ENCODE measurements at regions of chr15 and their contacts with region 1.

Region 1: GRCh38 chr15:57541805-57542504 is 49.7 kb upstream of the MYZAP start:
- DNase-seq: peak in 1 of 5 donors; percentile 14
- H3K4me3 ChIP-seq: no peak overlapping the region
- H3K4me3 Mint-ChIP-seq: no peak overlapping the region
- H3K27ac ChIP-seq: no peak overlapping the region
- H3K27ac Mint-ChIP-seq: no peak overlapping the region
- H3K4me1 ChIP-seq: no peaks in the 10 kb centered on the region
- H3K4me1 Mint-ChIP-seq: no peaks in the 10 kb centered on the region
- H3K27me3 ChIP-seq: no peaks in the 10 kb centered on the region
- H3K27me3 Mint-ChIP-seq: peaks cover 3 to 15% of the 10 kb centered on the region in 2 donors

Region 2: DNA sequence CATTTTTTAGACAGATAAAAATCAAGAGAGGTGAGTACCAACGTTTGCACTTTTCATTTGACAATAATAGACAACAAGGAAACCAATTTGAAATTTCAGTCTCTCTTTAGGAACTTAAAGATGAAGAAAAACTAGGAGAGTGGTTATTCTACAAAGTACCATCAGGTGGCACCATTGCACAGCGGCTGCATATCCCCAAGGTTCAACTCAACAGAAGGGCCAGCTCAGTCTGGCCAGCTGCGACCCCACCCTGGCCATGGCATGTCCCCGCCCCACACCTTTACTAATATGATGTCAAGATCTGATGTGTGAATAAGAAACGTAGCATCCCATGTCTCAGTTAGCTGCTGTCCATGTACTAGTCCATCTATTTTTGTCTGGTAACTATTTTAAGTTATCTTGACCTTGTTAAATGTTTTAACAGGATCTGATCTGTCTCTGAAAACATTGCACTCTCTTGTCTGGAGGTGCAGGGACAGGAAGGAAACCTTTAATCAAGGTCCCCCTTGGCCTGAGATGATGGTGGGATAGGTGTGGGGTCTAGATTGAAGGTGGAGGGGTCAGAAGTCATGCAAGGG is 201.2 kb before region 1 on chr15:
- CTCF ChIA-PET with region 1: interaction called, 5 read pairs
- POLR2A ChIA-PET with region 1: no interaction called
- intact Hi-C with region 1: loop called (anchors 5 kb)
- DNase-seq: peak in 4 of 5 donors; percentile 7 to 12 (median 8)
- H3K4me3 ChIP-seq: no peak overlapping the region
- H3K4me3 Mint-ChIP-seq: no peak overlapping the region
- H3K27ac ChIP-seq: no peak overlapping the region
- H3K27ac Mint-ChIP-seq: no peak overlapping the region
- H3K4me1 ChIP-seq: no peaks in the 10 kb centered on the region
- H3K4me1 Mint-ChIP-seq: peaks cover 0 to 2% (median 0%) of the 10 kb centered on the region in 4 donors
- H3K27me3 ChIP-seq: no peaks in the 10 kb centered on the region
- H3K27me3 Mint-ChIP-seq: peaks cover 12 to 21% of the 10 kb centered on the region in 2 donors

Region 3: DNA sequence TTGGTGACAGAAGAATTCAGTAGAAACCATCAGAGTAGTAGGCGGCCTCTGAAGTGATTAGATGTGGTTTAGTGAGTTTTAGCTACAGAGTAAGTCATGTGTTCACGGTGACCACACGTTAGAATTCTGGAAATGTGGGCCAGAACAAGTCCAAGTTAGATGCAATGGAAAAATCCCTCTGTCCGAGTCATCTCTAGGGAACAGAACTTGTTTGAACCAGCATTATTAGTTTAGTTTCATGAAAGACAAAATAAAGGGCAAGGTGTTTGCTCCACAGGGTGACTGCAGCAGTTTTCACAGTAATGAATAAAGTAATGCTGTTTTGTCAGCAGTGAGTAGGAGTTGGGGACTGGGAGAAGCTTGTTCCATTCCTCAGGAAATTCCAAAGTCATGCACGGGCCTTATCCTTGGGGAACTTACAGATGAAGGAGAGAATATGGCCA is 65.4 kb before region 1 on chr15:
- CTCF ChIA-PET with region 1: no interaction called
- POLR2A ChIA-PET with region 1: no interaction called
- intact Hi-C with region 1: no loop called
- DNase-seq: no peak
- H3K4me3 ChIP-seq: no peak overlapping the region
- H3K4me3 Mint-ChIP-seq: no peak overlapping the region
- H3K27ac ChIP-seq: no peak overlapping the region
- H3K27ac Mint-ChIP-seq: no peak overlapping the region
- H3K4me1 ChIP-seq: no peaks in the 10 kb centered on the region
- H3K4me1 Mint-ChIP-seq: no peaks in the 10 kb centered on the region
- H3K27me3 ChIP-seq: no peaks in the 10 kb centered on the region
- H3K27me3 Mint-ChIP-seq: peaks cover 15 to 26% of the 10 kb centered on the region in 2 donors

Measured in CD4-positive, alpha-beta memory T cell (primary cell).